OCI-LY7 (cell line): ENCODE measurements at regions of chr10 and their contacts with region 1.

Region 1: DNA sequence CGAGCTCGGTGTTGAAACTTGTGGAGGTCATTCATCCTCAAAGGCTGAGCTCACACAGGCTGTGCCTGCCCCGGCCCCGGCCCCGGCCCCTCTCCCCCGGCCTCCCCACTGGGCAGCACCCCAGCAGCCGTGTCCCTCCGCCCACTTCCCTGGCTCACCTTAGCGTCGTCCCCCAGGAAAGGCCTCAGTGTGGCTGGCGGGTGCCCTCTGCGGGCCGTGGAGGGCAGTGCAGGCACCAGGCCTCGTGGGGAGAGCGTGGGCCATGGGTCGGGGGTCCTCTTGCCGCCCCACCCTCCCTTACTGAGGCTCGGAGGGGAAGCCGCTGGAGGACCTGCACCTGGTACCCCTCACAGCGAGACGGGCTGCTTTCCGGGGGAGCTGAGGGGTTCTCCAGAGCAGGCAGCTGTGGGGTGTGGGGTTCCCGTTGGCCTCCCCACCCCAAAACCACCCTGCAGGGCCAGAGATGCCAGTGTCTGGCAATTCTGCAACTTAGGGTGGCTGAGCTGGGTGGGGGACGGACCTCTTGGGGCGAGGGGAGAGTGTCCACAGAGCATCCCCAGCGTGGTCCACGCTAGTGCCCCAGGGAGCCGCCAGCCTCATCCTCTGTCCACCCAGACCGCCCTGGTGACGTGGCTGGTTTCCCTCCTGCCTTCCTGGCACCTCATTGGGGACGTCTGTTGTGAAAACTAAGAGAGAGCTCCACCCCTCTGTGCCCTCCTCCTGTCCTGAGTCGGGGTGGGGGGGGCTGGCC is 44.2 kb upstream of the DPYSL4 start:
- DNase-seq: peak; percentile 40
- H3K4me3 ChIP-seq: no peak overlapping the region
- H3K27ac ChIP-seq: no peak overlapping the region
- H3K4me1 ChIP-seq: no peaks in the 10 kb centered on the region
- CTCF ChIP-seq: peak; percentile 73

Region 2: DNA sequence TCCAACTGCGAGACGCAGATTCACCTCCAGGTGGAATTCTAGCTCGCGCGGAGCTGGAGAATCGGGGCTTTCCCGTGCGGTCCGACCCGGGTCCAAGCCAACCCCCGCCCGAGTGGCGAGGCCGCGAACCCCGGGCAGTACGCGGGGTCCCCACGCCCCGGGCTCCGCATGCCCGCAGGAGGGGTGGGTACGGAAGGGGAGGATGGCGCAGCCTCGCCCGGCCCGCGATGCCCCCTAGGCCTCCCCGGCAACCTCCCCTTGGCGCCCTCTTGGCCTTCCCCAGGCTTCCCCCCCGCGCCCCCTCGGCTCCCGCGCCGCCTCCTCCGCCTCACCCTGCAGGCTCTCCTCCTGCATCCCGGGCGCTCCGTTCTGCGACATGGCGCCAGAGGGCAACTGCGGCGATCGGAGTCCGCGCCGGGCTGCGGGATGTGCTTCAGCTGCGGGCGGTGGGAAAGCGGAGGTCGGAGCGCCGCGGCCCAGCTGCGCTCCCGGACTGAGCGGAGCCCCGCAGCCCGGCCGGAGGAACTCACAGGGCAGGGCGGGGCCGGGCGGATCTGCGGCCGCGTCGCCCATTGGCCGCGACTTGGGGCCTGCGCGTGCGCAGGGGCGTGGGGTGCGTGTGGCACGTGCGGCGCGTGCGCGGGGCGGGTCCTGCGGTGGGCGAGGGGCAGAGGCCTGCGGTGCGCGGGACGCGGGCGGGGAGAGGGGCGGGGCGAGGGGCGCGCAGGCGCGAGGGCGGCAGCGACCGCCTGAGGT is 161.0 kb before region 1 on chr10 and contains the start of gene BNIP3:
- CTCF ChIA-PET with region 1: no interaction called
- POLR2A ChIA-PET with region 1: no interaction called
- intact Hi-C with region 1: loop called (anchors 10 kb)
- DNase-seq: peak; percentile 95
- H3K4me3 ChIP-seq: peak within 1 kb of the TSS; percentile 83
- H3K27ac ChIP-seq: no peak within 1 kb of the TSS
- H3K4me1 ChIP-seq: peaks cover 28% of the 10 kb centered on the region
- CTCF ChIP-seq: no peak
- total RNA-seq, gene BNIP3: 60.1 and 66.6 TPM in 2 replicates

Region 3: DNA sequence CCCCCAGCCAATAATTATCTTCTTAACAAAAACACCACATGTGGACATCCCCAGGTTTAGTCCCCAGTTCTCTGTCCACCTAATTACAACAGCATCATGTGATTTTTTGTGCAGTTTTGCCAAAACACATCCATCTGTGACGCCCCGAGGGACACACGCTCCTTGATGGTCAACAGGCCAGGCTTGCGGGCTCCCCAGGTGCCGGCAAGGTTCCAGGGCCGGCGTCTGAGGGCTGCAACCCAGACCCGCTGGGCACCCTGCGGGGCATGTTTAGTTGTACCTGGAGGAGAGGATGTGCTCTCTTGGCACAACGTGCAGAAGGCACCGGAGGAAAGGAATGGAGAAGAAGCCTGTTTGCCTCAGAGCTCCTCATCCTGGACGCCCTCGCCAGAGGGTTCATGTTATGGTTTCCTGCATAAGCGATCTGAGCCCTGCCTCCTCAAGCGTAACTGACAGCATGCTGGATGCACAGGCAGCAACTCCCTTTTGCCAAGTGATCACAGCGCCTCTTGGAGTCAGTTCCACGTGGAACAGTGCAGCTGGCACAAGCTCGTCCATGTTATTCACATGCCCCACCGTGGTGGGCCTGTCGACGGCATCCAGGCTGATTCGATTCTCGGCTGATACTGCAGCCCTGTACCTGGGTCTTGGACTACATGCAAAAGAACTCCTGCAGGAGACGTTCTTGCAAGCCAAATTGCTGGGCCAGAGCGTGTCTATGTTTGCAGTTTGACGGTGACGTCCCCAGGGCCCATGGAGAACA is 35.2 kb before region 1 on chr10:
- CTCF ChIA-PET with region 1: no interaction called
- POLR2A ChIA-PET with region 1: no interaction called
- intact Hi-C with region 1: no loop called
- DNase-seq: no peak
- H3K4me3 ChIP-seq: no peak overlapping the region
- H3K27ac ChIP-seq: no peak overlapping the region
- H3K4me1 ChIP-seq: no peaks in the 10 kb centered on the region
- CTCF ChIP-seq: no peak

Region 4: DNA sequence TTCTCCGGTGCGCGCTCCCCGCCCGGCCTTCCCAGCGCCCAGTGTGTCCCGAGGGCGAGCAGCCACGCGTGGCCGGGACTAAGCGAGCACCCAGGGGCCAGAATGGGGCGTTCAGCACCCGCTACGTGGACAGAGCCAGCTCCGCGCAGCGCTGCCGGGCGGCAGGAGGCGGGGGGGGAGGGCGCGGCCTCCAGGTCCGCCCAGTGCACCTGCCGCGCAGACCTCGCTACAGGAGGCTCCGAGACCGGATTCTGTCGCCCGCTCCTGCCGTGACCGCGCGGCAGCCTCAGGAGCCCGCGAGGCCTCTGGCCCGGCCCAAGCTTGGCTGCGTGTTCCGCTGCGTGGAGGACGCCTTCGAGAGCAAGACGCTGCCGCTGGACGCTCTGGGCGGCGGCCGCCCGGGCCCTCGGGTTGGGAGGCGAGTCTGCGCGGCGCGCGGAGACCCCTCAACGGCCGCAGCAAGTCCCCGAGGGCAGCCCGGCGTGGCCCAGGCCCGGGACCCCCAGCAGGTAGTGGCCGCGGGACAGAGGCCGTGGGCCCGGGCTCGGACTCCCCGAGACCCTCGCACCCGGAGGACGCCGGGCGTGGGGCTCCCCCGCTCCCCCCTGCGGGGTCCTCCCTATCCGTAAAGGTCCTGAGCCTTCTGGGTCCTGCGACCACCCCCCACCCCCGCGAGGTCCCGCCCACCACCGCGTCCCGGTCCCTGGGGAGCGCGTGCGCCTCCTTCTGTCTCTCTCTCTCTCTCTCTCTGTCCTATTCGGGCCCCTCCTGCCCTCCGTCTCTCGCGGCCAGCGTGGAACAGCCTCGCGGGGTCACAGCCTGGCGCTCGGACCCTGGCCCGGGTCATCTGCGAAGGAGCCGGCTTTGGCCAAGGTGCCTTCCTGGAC is 43.3 kb after region 1 on chr10:
- CTCF ChIA-PET with region 1: no interaction called
- POLR2A ChIA-PET with region 1: no interaction called
- intact Hi-C with region 1: no loop called
- DNase-seq: no peak
- H3K4me3 ChIP-seq: no peak overlapping the region
- H3K27ac ChIP-seq: no peak overlapping the region
- H3K4me1 ChIP-seq: no peaks in the 10 kb centered on the region
- CTCF ChIP-seq: no peak